Activated B cell treated with CpG ODN at 0.5 μM for 24 hours (primary cell): ENCODE measurements at regions of chr1 and their contacts with region 1.

Region 1: DNA sequence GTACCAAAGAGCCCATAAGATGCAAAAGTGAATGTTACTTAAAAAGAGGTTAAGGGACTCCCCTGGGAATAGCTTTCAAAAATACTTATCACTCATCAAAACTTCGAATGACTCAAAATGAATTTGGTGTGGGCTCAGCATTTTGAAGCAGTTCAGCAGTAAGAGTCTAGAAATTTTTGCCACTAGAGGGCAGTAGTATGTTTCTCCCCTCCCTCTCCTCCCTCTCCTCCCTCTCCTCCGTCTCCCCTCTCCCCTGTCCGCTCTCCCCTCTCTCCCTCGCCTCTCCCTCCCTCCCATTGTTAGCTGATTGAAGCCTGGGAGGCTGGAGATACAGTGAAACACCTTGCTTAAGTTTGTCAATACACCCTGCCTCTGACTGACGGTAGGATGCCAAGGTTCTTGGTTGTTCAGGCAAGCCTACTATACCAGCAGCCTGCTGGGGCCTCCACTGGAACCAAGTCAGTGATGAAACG is 70.8 kb upstream of the TENT5C start:
- DNase-seq: peak; percentile 26
- ATAC-seq: peak; percentile 85
- H3K4me3 Mint-ChIP-seq: peak overlapping the region; percentile 16
- H3K27ac Mint-ChIP-seq: no peak overlapping the region
- H3K4me1 Mint-ChIP-seq: peaks cover 2% of the 10 kb centered on the region
- H3K27me3 Mint-ChIP-seq: no peaks in the 10 kb centered on the region
- CTCF ChIP-seq: no peak

Region 2: GRCh38 chr1:117121776-117122697 is 413.0 kb before region 1 on chr1:
- CTCF ChIA-PET with region 1: no interaction called
- POLR2A ChIA-PET with region 1: no interaction called
- intact Hi-C with region 1: loop called (anchors 1 kb)
- DNase-seq: peak; percentile 76
- ATAC-seq: peak; percentile 88
- H3K4me3 Mint-ChIP-seq: peak overlapping the region; percentile 88
- H3K27ac Mint-ChIP-seq: peak overlapping the region; percentile 54
- H3K4me1 Mint-ChIP-seq: peaks cover 13% of the 10 kb centered on the region
- H3K27me3 Mint-ChIP-seq: peaks cover 2% of the 10 kb centered on the region
- CTCF ChIP-seq: no peak

Region 3: GRCh38 chr1:117523111-117523510 is 11.9 kb before region 1 on chr1:
- CTCF ChIA-PET with region 1: interaction called, 16 read pairs
- POLR2A ChIA-PET with region 1: no interaction called
- intact Hi-C with region 1: no loop called
- DNase-seq: no peak
- ATAC-seq: no peak
- H3K4me3 Mint-ChIP-seq: no peak overlapping the region
- H3K27ac Mint-ChIP-seq: no peak overlapping the region
- H3K4me1 Mint-ChIP-seq: no peaks in the 10 kb centered on the region
- H3K27me3 Mint-ChIP-seq: no peaks in the 10 kb centered on the region
- CTCF ChIP-seq: no peak

Region 4: GRCh38 chr1:117638759-117639158 is 103.7 kb after region 1 on chr1:
- CTCF ChIA-PET with region 1: interaction called, 10 read pairs
- POLR2A ChIA-PET with region 1: interaction called, 3 read pairs
- intact Hi-C with region 1: no loop called
- DNase-seq: no peak
- ATAC-seq: no peak
- H3K4me3 Mint-ChIP-seq: no peak overlapping the region
- H3K27ac Mint-ChIP-seq: no peak overlapping the region
- H3K4me1 Mint-ChIP-seq: peaks cover 56% of the 10 kb centered on the region
- H3K27me3 Mint-ChIP-seq: no peaks in the 10 kb centered on the region
- CTCF ChIP-seq: no peak

Region 5: DNA sequence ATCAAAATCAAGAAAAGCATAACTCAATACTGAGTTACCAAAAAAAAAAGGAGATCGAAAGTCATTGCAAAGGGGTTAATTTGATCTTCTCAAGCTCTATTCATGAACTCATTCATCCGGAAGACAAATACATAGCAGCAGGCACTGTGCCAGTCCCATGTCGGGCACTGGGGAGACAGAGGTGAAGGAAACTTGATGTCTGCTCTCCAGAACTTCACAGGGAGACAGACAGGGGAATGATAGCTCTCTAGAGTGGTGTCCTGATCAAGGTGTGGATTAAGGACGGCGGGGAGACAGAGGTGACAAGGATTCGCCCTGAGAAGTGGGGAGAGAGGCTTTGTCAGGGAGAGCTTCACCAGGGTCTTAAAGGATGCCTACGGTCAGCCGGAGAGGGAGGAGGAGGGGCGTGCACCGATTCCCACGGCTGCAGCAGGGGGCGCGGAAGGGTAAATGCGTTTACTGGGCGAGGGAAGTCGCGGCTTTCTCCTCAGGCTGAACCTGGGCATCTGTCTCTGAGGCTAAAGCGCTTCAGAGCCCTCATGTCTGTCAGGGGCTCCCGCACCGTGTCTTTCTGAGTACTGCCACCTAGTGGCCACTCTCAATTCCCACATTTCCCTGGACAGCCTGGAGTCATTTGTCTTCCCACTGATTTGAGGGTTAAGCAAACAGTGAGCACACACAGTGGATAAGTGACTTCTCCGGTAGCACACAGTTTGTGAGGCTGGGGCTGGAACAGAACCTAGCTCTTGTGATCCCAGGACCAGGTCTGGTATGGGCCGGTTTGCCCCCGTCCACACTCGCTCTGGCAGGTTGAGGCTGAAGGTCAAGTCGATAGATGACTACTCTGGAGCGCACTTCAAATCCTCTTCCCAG is 223.6 kb after region 1 on chr1:
- CTCF ChIA-PET with region 1: interaction called, 239 read pairs
- POLR2A ChIA-PET with region 1: interaction called, 8 read pairs
- intact Hi-C with region 1: loop called (anchors 1 kb)
- DNase-seq: peak; percentile 45
- ATAC-seq: peak; percentile 92
- H3K4me3 Mint-ChIP-seq: peak overlapping the region; percentile 73
- H3K27ac Mint-ChIP-seq: no peak overlapping the region
- H3K4me1 Mint-ChIP-seq: peaks cover 12% of the 10 kb centered on the region
- H3K27me3 Mint-ChIP-seq: peaks cover 15% of the 10 kb centered on the region
- CTCF ChIP-seq: peak; percentile 45